ENCODE measurements at regions of chr3 and their contacts with region 1.

Region 1: GRCh38 chr3:15629860-15630597 is 28.5 kb downstream of the BTD start:
- DNase-seq: peak; percentile 83
- ATAC-seq: peak; percentile 98
- H3K4me3 ChIP-seq: peak overlapping the region; percentile 65; the same call in 1 of the 2 replicates
- H3K27ac ChIP-seq: peak overlapping the region; percentile 51
- H3K4me1 ChIP-seq: peaks cover 12% of the 10 kb centered on the region
- H3K27me3 ChIP-seq: no peaks in the 10 kb centered on the region
- CTCF ChIP-seq: peak; percentile 66 to 88 (median 82)
- EP300 ChIP-seq: no peak
- POLR2A ChIP-seq: no peak
- RAD21 ChIP-seq: peak; percentile 91

Region 2: DNA sequence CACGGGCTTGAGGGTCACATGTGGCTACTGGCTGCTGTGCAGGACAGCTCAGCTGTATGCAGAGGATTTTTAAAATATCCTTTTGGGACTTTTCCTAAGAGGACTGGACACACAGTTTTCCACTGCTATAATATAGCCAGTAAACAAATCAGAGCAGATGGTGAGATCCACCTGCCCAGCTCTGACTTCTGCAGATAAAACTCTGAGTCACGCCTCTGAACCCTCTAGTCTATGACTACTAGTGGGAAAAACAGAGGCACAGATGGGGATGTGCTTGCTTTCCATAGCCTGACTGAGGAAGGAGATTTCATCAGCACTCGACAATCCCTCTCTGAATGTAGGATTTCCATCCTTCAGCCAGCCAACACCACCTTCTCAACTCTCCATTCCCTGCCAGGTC is 153.7 kb before region 1 on chr3:
- CTCF ChIA-PET with region 1: no interaction called
- POLR2A ChIA-PET with region 1: no interaction called
- RAD21 ChIA-PET with region 1: no interaction called
- SMC1A ChIA-PET with region 1: no interaction called
- in situ Hi-C with region 1: no loop called
- intact Hi-C with region 1: no loop called
- DNase-seq: no peak
- ATAC-seq: no peak
- H3K4me3 ChIP-seq: no peak overlapping the region
- H3K27ac ChIP-seq: no peak overlapping the region
- H3K4me1 ChIP-seq: no peaks in the 10 kb centered on the region
- H3K27me3 ChIP-seq: no peaks in the 10 kb centered on the region
- CTCF ChIP-seq: no peak
- EP300 ChIP-seq: no peak
- POLR2A ChIP-seq: no peak
- RAD21 ChIP-seq: no peak

Region 3: GRCh38 chr3:15542614-15543013 is 87.4 kb before region 1 on chr3:
- CTCF ChIA-PET with region 1: no interaction called
- POLR2A ChIA-PET with region 1: no interaction called
- RAD21 ChIA-PET with region 1: no interaction called
- SMC1A ChIA-PET with region 1: no interaction called
- in situ Hi-C with region 1: no loop called
- intact Hi-C with region 1: no loop called
- DNase-seq: no peak
- ATAC-seq: no peak
- H3K4me3 ChIP-seq: no peak overlapping the region
- H3K27ac ChIP-seq: no peak overlapping the region
- H3K4me1 ChIP-seq: no peaks in the 10 kb centered on the region
- H3K27me3 ChIP-seq: no peaks in the 10 kb centered on the region
- CTCF ChIP-seq: no peak
- EP300 ChIP-seq: no peak
- POLR2A ChIP-seq: no peak
- RAD21 ChIP-seq: no peak

Region 4: GRCh38 chr3:15647611-15648167 is 17.7 kb after region 1 on chr3:
- CTCF ChIA-PET with region 1: interaction called, 35 read pairs
- POLR2A ChIA-PET with region 1: interaction called, 8 read pairs
- RAD21 ChIA-PET with region 1: interaction called, 22 read pairs
- SMC1A ChIA-PET with region 1: interaction called, 61 read pairs
- in situ Hi-C with region 1: no loop called
- intact Hi-C with region 1: no loop called
- DNase-seq: peak; percentile 94
- ATAC-seq: peak; percentile 96
- H3K4me3 ChIP-seq: peak overlapping the region; percentile 24
- H3K27ac ChIP-seq: peak overlapping the region; percentile 81
- H3K4me1 ChIP-seq: peaks cover 38% of the 10 kb centered on the region
- H3K27me3 ChIP-seq: no peaks in the 10 kb centered on the region
- CTCF ChIP-seq: no peak
- EP300 ChIP-seq: peak; percentile 87 to 95
- POLR2A ChIP-seq: peak; percentile 30; the same call in 1 of the 2 replicates
- RAD21 ChIP-seq: no peak

Region 5: DNA sequence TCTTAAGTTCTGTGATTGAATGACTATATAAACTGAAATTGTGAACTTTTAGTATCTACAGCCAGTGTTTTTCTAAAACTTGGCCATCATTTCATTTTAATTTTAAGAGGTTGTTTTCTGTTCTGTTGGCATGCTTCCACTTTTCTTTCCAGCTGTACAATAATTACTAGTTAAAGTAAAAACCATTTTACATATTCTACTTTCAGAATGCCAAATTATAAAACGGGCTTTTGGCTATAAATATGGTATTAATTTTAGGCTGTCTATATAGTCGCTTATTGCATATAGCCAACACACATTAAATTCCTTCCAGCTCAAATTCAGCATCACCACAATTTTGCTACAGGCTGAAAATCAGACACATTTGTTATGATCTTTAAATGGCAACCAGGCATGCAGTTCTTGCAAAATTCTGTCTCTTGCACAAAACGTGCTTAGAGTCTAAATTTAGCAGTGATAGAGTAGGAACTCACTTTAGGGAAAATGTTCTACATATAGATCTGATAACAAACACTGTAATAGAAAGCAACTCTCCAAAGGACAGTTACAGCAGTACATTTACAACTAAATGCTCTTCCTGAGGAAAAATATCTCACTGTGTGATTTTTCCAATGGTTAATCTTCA is 52.6 kb after region 1 on chr3:
- CTCF ChIA-PET with region 1: interaction called, 11 read pairs
- POLR2A ChIA-PET with region 1: no interaction called
- RAD21 ChIA-PET with region 1: interaction called, 4 read pairs
- SMC1A ChIA-PET with region 1: interaction called, 13 read pairs
- in situ Hi-C with region 1: no loop called
- intact Hi-C with region 1: no loop called
- DNase-seq: no peak
- ATAC-seq: no peak
- H3K4me3 ChIP-seq: no peak overlapping the region
- H3K27ac ChIP-seq: no peak overlapping the region; the same call in 1 of the 2 replicates
- H3K4me1 ChIP-seq: no peaks in the 10 kb centered on the region
- H3K27me3 ChIP-seq: no peaks in the 10 kb centered on the region
- CTCF ChIP-seq: no peak
- EP300 ChIP-seq: no peak
- POLR2A ChIP-seq: no peak
- RAD21 ChIP-seq: no peak

Region 6: DNA sequence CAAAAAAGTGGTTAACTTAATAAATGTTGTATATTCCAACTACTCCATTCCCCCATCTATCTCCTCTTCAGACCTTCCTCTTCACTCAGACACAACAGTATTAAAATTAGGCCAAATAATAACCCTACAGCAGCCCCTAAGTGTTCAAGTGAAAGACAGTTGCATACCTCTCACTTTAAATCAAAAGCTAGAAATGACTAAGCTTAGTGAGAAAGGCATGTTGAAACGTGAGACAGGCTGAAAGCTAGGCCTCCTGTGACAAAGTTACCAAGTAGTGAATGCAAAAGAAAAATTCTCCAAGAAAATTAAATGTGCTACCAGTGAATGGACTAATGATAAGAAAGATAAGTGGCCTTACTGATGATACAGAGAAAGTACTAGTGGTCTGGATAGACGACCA is 96.0 kb after region 1 on chr3:
- CTCF ChIA-PET with region 1: interaction called, 10 read pairs
- POLR2A ChIA-PET with region 1: no interaction called
- RAD21 ChIA-PET with region 1: interaction called, 12 read pairs
- SMC1A ChIA-PET with region 1: interaction called, 9 read pairs
- in situ Hi-C with region 1: no loop called
- intact Hi-C with region 1: no loop called
- DNase-seq: peak; percentile 60
- ATAC-seq: peak; percentile 93
- H3K4me3 ChIP-seq: no peak overlapping the region
- H3K27ac ChIP-seq: peak overlapping the region; percentile 71
- H3K4me1 ChIP-seq: peaks cover 18% of the 10 kb centered on the region
- H3K27me3 ChIP-seq: no peaks in the 10 kb centered on the region
- CTCF ChIP-seq: no peak
- EP300 ChIP-seq: no peak
- POLR2A ChIP-seq: no peak
- RAD21 ChIP-seq: no peak

Region 7: GRCh38 chr3:15797642-15798303 is 167.7 kb after region 1 on chr3 and contains the start of gene ANKRD28:
- CTCF ChIA-PET with region 1: interaction called, 11 read pairs
- POLR2A ChIA-PET with region 1: interaction called, 12 read pairs
- RAD21 ChIA-PET with region 1: interaction called, 60 read pairs
- SMC1A ChIA-PET with region 1: interaction called, 31 read pairs
- in situ Hi-C with region 1: no loop called
- intact Hi-C with region 1: no loop called
- DNase-seq: no peak
- ATAC-seq: peak; percentile 32
- H3K4me3 ChIP-seq: peak within 1 kb of the TSS; percentile 73
- H3K27ac ChIP-seq: peak within 1 kb of the TSS; percentile 94
- H3K4me1 ChIP-seq: peaks cover 27% of the 10 kb centered on the region; the same call in 1 of the 2 replicates
- H3K27me3 ChIP-seq: no peaks in the 10 kb centered on the region
- CTCF ChIP-seq: peak; percentile 7 to 25 (median 14); a peak in 1 of 6 replicates
- EP300 ChIP-seq: peak in 1 of 2 experiments; percentile 64; a peak in 1 of 4 replicates
- POLR2A ChIP-seq: 0 out of 2 replicates have a peak, but pooled peaks have one; percentile 32
- RAD21 ChIP-seq: no peak
- polyA plus RNA-seq, gene ANKRD28: 12.3 to 13.7 TPM

Region 8: DNA sequence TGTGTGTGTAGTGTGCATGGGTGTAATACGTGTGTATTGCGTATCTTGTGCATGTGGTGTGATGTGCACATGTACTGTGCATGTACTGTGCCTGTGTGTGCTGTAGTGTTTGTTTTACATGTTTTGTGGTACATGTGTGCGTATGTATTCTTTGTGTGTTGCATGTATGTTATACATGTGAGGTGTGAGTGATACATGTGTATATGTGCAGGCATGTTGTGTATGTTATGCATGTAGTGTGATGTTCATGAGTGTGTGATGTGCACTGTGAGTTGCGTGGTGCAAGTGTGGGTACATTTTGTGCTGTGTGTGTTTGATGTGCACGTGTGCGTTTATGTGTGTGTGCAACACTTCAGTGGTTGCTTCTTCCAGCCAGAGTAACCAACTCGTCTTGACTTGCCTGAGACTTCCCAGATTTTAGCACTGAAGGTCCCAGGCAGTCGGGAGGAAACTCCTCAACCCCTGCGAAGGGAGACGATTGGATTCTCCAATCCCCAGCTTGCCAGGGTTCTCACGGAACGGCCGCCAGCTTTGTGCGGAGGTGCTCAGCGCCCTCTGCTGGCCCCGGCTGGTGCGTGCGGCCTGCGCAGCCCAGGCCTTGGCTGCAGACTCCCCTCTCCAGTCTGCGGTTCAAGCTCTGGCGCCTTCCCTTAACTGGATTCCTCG is 548.1 kb after region 1 on chr3:
- CTCF ChIA-PET with region 1: interaction called, 4 read pairs
- POLR2A ChIA-PET with region 1: no interaction called
- RAD21 ChIA-PET with region 1: interaction called, 4 read pairs
- SMC1A ChIA-PET with region 1: no interaction called
- in situ Hi-C with region 1: no loop called
- intact Hi-C with region 1: loop called (anchors 10 kb)
- DNase-seq: no peak
- ATAC-seq: peak; percentile 96
- H3K4me3 ChIP-seq: no peak overlapping the region
- H3K27ac ChIP-seq: no peak overlapping the region
- H3K4me1 ChIP-seq: no peaks in the 10 kb centered on the region
- H3K27me3 ChIP-seq: peaks cover 0 to 3% of the 10 kb centered on the region in 2 experiments; a peak in 2 of 4 replicates
- CTCF ChIP-seq: peak; percentile 89 to 99 (median 98)
- EP300 ChIP-seq: no peak
- POLR2A ChIP-seq: no peak
- RAD21 ChIP-seq: peak; percentile 95

Measured in GM12878 (cell line).